Cardiac septum (tissue), 1 donor: ENCODE measurements at regions of chr9 and their contacts with region 1.

Region 1: DNA sequence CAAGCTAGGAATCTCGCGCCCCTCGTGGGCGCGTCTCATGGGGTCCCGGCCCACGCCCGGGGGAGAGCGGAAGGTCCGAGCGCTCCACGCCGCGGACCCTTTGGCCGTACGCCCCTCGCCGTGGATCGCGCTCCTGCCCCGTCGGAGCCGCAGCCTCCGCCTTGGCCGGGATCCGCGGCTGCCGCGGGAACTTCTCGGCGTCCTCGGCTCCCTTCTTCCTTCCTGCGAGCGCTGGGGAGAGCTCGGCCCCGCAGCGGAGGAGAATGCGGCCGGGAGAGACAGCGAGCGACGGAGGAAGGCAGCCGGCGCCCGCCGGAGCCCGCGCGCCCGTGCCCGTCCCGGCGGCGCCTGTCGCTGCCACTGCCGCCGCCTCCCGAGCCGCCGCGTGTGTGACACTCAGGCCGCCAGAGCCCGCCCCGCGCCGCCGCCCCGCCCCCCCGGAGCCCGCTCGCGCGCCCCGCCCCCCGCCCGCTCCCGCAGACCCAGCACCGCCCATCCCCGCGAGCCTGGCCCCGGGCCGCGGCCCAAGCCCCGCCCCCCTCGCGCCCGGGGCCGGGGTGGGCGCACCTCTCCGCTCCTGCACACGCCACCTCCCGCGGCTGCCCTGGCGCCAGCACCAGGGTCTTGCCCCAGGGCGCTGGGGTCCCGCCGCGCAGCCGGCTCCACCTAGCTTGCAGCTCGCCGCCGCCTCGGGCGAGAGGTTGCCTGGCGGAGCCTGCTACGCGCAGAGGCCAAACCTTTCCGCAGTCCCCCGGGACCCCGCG is at the start of gene SHB:
- DNase-seq: peak; percentile 95
- total RNA-seq, gene SHB: 39.0 TPM

Region 2: DNA sequence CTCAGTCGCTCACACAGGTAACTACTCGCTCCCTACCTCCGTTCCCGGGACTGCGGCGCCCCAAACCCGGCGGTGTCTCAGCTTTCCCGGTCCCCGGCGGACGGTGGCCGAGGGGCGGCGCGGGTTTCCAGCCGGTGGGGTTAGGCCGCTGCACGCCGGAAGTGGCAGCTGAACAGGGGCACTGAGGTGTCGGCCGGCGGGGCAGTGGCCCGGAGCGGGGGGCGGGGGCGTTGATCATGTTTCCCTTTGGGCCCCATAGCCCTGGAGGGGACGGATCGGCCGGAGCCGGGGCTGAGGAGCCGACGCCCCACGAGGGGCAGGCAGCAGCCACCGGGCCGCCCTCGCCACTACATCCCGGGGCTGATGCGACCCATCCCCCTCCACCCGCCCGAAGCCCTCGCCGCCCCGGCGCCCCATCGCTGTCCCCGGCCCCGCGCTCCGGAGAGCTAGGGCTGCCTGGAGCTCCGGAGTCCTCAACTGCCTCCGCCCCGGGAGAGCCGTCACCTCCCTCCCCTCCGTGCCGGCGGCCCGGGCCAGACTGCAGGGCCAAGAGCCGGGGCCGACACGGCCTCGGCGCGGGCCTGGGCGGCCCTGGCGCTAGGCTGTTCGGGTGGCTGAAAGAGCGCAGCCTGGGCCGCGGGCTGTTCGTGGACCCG is 268.3 kb before region 1 on chr9 and contains the start of gene DCAF10:
- intact Hi-C with region 1: loop called (anchors 10 kb)
- DNase-seq: peak; percentile 94
- total RNA-seq, gene DCAF10: 15.7 TPM

Region 3: DNA sequence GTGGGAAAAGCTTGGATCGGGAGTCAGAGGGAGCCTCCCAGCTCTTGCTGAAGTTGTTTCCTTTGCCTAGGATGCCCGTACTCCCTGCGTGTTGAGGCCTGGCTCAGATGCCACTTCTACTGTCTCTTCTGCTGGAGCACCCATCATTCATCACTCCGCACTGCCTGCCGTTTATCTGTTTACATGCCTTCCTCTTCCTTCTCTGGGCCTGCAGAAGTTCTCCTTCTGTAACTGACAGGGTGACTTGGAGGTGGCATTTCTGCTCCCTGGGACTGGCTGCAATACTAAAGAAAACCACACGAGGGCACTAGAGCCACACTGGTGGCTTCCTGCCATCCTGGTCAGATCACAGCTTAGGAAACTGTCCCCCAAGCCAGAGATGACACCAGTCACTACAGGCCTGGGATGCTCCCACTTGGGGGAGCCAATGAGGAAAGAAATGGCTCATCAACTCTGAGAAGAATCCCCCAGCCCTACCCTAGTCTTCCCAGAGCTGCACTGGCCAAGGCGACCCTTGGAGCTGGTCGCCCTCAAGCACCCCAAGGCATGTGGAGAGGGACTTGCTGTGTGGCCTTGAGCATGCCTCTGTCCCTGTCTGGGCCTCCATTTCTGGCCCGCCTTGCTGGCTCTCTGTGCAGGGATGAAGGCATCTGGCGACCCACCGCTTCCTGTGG is 155.4 kb before region 1 on chr9:
- intact Hi-C with region 1: loop called (anchors 2 kb)
- DNase-seq: peak; percentile 87

Region 4: DNA sequence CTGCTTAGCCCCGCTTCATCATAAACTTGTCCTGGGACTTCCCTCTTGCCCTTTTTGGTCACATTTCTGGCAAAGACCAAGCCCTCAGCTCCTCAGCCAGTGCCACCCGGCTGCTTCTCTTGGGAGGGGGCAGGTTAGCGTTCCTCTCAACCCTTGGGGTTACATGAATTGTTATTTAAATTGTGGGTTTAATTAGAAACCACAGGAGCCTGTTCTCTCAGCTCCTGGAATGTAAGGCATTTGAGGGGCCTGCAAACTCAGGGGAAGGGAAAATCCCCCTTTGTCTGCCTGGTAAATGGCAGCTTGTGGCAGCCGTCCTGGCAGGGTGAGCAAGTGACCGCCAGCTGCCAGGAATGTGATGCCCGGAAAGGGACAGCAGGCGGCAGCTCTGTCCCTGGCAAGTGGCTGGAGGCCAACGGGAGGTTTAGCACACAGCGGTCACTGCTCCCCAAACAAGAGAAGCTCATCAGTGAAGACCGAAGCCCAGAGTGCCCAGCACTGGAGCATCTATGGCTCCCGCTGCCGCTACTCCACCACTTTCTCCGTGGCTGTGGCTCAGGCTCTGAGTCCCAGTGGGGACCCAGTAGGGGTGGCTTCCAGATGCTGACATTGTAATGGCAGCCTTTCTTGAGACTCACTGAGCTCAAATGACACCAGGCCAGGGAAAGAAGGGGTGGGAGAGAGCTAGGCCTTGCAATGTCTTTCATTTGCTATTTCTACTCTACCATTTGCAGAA is 51.7 kb before region 1 on chr9:
- intact Hi-C with region 1: loop called (anchors 5 kb)
- DNase-seq: peak; percentile 90

Region 5: GRCh38 chr9:38047301-38048251 is 21.5 kb before region 1 on chr9:
- intact Hi-C with region 1: loop called (anchors 2 kb)
- DNase-seq: peak; percentile 90